Transverse colon (tissue), 4 donors: ENCODE measurements at regions of chr5 and their contacts with region 1.

Region 1: DNA sequence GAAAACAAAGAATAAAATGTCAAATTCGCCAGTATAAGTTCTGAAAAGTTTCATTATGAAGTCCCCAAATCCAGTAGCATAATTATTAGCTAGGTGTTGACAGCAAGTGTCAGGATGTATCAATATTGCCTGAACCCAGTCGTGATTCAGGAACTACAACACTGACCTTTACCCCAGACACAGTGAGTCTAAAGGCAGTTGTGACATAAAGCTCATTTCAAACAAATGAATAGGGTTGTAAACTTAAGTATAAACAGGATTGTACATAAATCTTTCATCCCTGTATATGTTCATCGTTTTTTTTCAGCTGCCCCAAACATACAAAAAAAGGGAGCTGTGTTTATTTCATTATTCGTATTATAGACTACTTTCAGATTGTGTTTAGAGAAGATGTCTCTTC is 385.7 kb downstream of the PLK2 start:
- DNase-seq: no peak
- H3K4me3 ChIP-seq: no peak overlapping the region
- H3K27ac ChIP-seq: peak overlapping the region in 3 of 4 donors; percentile 22 to 50 (median 43)
- H3K4me1 ChIP-seq: peaks cover 0 to 46% (median 4%) of the 10 kb centered on the region in 4 donors
- H3K27me3 ChIP-seq: no peaks in the 10 kb centered on the region
- CTCF ChIP-seq: no peak
- EP300 ChIP-seq: no peak
- POLR2A ChIP-seq: no peak

Region 2: GRCh38 chr5:58127479-58128220 is 53.4 kb after region 1 on chr5:
- in situ Hi-C with region 1: no loop called
- intact Hi-C with region 1: loop called (anchors 2 kb)
- DNase-seq: no peak
- H3K4me3 ChIP-seq: no peak overlapping the region
- H3K27ac ChIP-seq: no peak overlapping the region
- H3K4me1 ChIP-seq: peaks cover 0 to 4% (median 0%) of the 10 kb centered on the region in 4 donors
- H3K27me3 ChIP-seq: no peaks in the 10 kb centered on the region
- CTCF ChIP-seq: no peak
- EP300 ChIP-seq: no peak
- POLR2A ChIP-seq: no peak

Region 3: DNA sequence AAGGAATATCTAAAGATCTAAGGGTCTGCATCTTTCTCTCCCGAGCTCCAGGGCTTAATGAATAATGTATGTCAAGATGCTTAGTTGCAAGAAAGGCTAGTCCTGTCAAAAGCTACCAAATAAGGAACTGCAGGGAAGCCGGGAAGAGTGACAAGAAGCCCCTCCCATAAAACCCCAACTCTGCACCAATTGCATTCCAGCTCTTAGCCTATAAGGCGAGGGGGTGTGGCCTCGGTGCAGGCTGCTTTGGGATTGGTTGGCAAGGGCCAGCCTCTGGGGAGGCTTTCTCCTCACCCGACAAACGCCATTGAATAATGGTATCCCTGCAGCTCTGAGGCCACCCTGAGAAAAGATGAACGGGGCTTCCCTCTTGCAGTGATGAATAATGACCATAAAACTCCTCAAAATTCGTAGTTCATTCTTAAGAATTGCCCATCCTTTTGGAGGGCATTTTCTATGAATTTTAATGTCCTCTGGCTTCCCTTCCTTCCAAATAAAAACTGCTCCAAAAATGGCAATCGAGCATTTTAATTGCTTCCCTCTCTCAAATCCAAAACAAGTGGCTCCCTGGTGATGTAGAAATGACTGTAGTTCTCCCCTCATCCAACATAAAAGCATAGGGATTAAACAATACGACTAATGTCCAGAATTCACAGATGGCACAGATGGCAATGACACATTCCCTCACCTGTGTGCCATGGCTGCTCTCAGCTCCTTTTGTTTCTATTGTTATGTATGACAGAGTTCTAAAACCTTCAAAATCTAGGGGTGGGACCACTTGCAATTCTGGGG is 925.8 kb after region 1 on chr5:
- in situ Hi-C with region 1: no loop called
- intact Hi-C with region 1: no loop called
- DNase-seq: no peak
- H3K4me3 ChIP-seq: no peak overlapping the region
- H3K27ac ChIP-seq: no peak overlapping the region
- H3K4me1 ChIP-seq: peaks cover 0 to 20% (median 10%) of the 10 kb centered on the region in 4 donors
- H3K27me3 ChIP-seq: no peaks in the 10 kb centered on the region
- CTCF ChIP-seq: no peak
- EP300 ChIP-seq: no peak
- POLR2A ChIP-seq: no peak